SK-N-SH (cell line): ENCODE measurements at regions of chr7 and their contacts with region 1.

Region 1: DNA sequence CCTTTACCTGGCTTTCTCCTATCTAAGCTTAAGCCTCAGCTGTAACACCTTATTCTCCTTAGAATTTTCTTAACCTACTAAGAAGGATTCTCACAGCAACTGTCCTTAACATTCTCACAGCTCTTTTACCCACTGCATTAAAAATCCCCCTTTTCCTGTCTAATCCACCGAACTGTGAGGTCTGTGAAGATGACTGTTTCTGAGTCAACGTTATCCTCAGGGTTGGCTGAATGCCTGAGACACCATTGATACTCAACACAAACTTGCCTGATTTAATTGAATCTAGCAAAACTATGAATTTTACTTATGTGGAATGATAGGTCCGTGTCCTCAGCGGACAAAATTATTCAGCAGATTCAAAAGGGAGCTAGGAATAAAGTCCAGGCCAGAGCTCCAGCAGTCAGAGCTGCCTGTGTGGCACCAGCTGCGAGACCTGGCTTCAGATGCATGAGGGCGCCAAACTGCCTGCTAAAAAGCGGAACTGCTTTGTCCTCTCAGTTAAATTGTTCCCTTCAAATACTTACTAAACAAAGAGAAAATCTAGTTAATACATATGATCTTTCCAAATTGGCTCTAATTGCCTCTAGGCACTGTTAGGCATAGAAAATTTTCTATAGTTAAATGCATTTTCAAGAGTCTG is 33.4 kb upstream of the VWDE start:
- DNase-seq: peak; percentile 28
- H3K4me3 ChIP-seq: no peak overlapping the region
- H3K27ac ChIP-seq: peak overlapping the region in 1 of 2 experiments; percentile 43; a peak in 2 of 4 replicates
- H3K4me1 ChIP-seq: peaks cover 0 to 5% of the 10 kb centered on the region in 2 experiments; a peak in 2 of 4 replicates
- H3K27me3 ChIP-seq: 0 out of 2 replicates have a peak, but pooled peaks cover 4% of the 10 kb centered on the region
- CTCF ChIP-seq: peak; percentile 27; the same call in 1 of the 2 replicates
- EP300 ChIP-seq: no peak
- RAD21 ChIP-seq: peak; percentile 59

Region 2: DNA sequence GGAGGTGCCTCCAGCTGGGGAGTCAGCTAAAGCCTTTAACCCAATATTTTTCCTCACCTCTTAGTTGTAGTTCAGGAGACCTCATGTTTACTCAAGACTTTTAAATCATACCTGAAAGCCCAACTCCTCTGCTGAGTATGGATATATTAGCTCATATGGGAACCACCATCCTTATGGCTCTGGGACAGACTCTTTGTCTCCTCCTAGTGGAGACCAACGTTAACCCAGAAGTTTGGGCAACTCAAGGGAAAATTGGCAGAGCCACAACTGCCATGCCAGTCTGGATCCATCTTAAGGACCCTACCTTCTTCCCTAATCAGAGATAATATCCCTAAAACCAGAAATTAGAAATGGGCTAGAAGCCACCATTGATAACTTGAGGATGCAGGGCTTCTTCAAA is 145.1 kb before region 1 on chr7:
- CTCF ChIA-PET with region 1: no interaction called
- POLR2A ChIA-PET with region 1: no interaction called
- DNase-seq: no peak
- H3K4me3 ChIP-seq: no peak overlapping the region
- H3K27ac ChIP-seq: no peak overlapping the region
- H3K4me1 ChIP-seq: no peaks in the 10 kb centered on the region; a peak in 1 of 4 replicates
- H3K27me3 ChIP-seq: no peaks in the 10 kb centered on the region
- CTCF ChIP-seq: peak; percentile 54
- EP300 ChIP-seq: no peak
- RAD21 ChIP-seq: peak; percentile 16; the same call in 1 of the 2 replicates

Region 3: DNA sequence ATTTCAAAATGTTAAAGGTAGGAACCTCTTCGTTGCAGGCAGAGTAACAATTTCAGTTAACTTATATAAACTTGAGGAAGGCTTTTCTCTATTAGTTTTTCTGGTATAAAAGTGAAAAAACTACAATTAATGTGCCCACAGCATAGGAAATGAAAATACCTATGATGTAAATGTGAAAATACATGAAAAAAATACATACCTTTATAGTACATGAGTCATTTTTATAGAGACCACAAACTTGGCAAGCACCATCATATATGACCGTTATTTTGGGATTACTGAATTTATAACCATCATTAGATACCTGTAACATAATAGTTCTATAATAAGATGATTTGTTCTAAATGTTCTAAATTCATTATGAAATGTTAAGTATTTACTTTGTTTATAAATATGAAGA is 76.1 kb before region 1 on chr7:
- CTCF ChIA-PET with region 1: no interaction called
- POLR2A ChIA-PET with region 1: no interaction called
- DNase-seq: no peak
- H3K4me3 ChIP-seq: no peak overlapping the region
- H3K27ac ChIP-seq: no peak overlapping the region
- H3K4me1 ChIP-seq: no peaks in the 10 kb centered on the region; a peak in 1 of 4 replicates
- H3K27me3 ChIP-seq: no peaks in the 10 kb centered on the region
- CTCF ChIP-seq: no peak
- EP300 ChIP-seq: no peak
- RAD21 ChIP-seq: no peak

Region 4: DNA sequence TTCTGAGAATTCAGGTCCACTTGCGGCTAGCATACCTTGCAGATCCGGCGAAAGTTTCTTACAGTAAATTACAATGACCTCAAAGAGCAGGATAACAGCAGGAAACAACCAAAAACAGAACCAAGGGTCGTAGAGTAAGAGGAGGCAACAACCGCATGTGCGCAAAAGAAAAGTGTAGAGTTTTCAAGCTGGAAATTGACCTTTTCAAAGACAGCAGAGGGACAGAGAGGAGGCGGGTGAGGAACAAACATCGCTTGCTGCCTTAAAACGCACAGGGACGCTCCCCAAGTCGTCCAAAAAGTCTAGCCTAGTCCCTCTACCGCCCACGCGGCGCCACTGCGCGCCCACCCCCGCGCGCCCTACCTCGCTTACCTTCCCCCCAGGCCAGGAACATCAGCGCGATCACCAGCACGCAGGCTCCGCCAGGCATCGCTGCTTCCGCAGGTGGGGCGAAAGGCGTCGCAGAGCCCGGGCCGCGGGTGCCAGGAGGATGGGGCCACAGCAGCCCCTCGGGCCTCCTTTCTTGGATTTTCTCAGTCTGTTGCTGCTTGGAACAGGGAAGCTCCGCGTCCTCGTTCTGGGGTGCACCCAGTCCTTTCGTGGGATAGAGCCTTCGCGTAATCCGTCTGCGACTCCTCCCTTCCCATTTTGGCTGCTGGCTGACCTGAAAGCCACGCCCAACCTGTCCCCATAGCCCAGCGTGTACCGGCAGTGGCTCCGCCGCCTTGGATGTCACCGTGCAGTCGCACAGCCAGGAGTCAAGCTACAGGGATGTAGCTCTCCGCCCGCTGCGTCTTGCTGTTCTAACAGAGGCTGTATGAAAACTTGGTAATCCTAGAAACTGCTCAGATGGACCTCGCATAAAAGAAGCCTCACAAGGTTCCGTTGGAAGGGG is 33.5 kb before region 1 on chr7 and contains the start of gene VWDE:
- CTCF ChIA-PET with region 1: interaction called, 22 read pairs
- POLR2A ChIA-PET with region 1: no interaction called
- DNase-seq: peak; percentile 80
- H3K4me3 ChIP-seq: peak within 1 kb of the TSS; percentile 59 to 62
- H3K27ac ChIP-seq: peak within 1 kb of the TSS in 1 of 2 experiments; percentile 32; a peak in 1 of 4 replicates
- H3K4me1 ChIP-seq: peaks cover 0 to 8% of the 10 kb centered on the region in 2 experiments; a peak in 2 of 4 replicates
- H3K27me3 ChIP-seq: peaks cover 9% of the 10 kb centered on the region; the same call in 1 of the 2 replicates
- CTCF ChIP-seq: no peak
- EP300 ChIP-seq: no peak
- RAD21 ChIP-seq: no peak
- polyA plus RNA-seq, gene VWDE: 0.03 TPM in 1 of 2 replicates, not detected in the other

Region 5: DNA sequence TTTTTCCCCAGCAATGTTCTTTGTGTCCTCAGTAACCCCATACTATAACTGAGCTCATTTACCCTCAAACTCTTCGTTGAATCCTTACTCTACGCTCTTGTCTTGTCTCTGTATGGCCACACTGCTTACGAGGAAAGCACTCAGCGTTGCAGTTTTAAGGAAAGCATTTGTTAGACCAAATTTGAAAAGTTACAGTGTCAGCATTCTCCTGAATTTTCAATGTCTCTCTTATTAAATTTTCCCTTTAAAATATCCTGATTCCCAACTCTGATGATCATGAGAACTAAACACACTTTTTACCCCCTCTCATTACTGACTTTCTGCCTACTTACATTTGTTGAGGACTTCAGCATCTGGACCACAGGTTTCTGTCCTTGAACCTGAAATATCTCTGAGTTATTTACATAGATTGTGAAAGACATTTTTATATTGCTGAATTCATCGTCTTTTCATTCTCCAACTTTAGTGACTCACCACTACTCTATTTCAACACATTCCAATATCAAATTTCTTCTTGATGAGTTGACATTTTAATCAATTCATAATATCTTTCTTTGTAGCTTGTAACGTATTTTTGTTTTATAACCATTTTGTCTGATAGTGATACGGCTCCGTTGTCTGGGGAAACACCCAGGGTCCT is 13.5 kb before region 1 on chr7:
- CTCF ChIA-PET with region 1: interaction called, 33 read pairs
- POLR2A ChIA-PET with region 1: no interaction called
- DNase-seq: no peak
- H3K4me3 ChIP-seq: no peak overlapping the region
- H3K27ac ChIP-seq: no peak overlapping the region
- H3K4me1 ChIP-seq: peaks cover 0 to 3% of the 10 kb centered on the region in 2 experiments; a peak in 1 of 4 replicates
- H3K27me3 ChIP-seq: no peaks in the 10 kb centered on the region
- CTCF ChIP-seq: no peak
- EP300 ChIP-seq: no peak
- RAD21 ChIP-seq: no peak

Region 6: GRCh38 chr7:12475362-12476063 is 38.5 kb after region 1 on chr7:
- CTCF ChIA-PET with region 1: interaction called, 10 read pairs
- POLR2A ChIA-PET with region 1: no interaction called
- DNase-seq: no peak
- H3K4me3 ChIP-seq: no peak overlapping the region
- H3K27ac ChIP-seq: no peak overlapping the region
- H3K4me1 ChIP-seq: no peaks in the 10 kb centered on the region
- H3K27me3 ChIP-seq: no peaks in the 10 kb centered on the region; the same call in 1 of the 2 replicates
- CTCF ChIP-seq: no peak
- EP300 ChIP-seq: no peak
- RAD21 ChIP-seq: no peak